CD4-positive, alpha-beta T cell (primary cell): ENCODE measurements at regions of chr12 and their contacts with region 1.

Region 1: GRCh38 chr12:121917979-121918678 is at the start of gene CFAP251:
- DNase-seq: peak; percentile 87 to 98 (median 95)
- ATAC-seq: peak; percentile 99
- H3K4me3 ChIP-seq: peak within 1 kb of the TSS; percentile 51
- H3K4me3 Mint-ChIP-seq: peak within 1 kb of the TSS; percentile 52
- H3K27ac ChIP-seq: peak within 1 kb of the TSS; percentile 48 to 69
- H3K27ac Mint-ChIP-seq: peak within 1 kb of the TSS; percentile 80
- H3K4me1 ChIP-seq: peaks cover 14% of the 10 kb centered on the region
- H3K4me1 Mint-ChIP-seq: peaks cover 8% of the 10 kb centered on the region
- H3K27me3 ChIP-seq: no peaks in the 10 kb centered on the region
- H3K27me3 Mint-ChIP-seq: no peaks in the 10 kb centered on the region
- CTCF ChIP-seq: peak; percentile 91
- total RNA-seq, gene CFAP251: 0.28 to 0.33 TPM

Region 2: DNA sequence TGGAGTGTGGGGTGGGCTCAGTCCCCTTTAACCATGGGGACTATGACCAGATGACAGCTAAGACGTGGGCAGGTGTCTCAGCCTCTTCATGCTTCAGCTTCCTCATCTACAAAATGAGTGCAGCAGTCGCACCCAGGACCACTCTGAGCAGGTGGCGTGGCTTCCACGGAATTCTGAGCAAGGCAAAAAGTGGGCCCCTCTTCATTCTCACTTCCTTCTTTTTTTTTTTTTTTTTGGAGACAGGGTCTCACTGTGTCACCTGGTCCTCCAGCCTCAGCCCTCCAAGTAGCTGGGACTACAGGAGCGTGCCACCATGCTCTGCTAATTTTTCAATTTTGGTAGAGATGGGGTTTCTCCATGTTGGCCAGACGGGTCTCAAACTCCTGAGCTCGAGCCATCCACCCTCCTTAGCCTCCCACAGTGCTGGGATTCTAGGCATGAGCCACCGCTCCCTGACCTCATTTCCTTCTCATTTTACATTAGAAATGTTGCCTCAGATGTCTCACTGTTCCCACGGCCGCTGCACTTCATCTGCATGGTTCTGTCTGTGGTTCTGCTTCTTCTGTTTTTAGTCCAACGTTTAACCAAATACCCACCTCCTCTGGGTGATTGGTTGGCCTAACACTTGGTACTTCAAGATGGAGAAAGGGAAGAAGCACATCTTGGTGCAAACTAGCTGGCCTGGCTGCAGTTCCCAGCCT is 62.2 kb after region 1 on chr12:
- CTCF ChIA-PET with region 1: no interaction called
- POLR2A ChIA-PET with region 1: no interaction called
- intact Hi-C with region 1: no loop called
- DNase-seq: peak in 3 of 14 experiments; percentile 25 to 62 (median 51)
- ATAC-seq: no peak
- H3K4me3 ChIP-seq: no peak overlapping the region
- H3K4me3 Mint-ChIP-seq: no peak overlapping the region
- H3K27ac ChIP-seq: no peak overlapping the region
- H3K27ac Mint-ChIP-seq: no peak overlapping the region
- H3K4me1 ChIP-seq: no peaks in the 10 kb centered on the region
- H3K4me1 Mint-ChIP-seq: peaks cover 9% of the 10 kb centered on the region
- H3K27me3 ChIP-seq: no peaks in the 10 kb centered on the region
- H3K27me3 Mint-ChIP-seq: no peaks in the 10 kb centered on the region
- CTCF ChIP-seq: no peak

Region 3: DNA sequence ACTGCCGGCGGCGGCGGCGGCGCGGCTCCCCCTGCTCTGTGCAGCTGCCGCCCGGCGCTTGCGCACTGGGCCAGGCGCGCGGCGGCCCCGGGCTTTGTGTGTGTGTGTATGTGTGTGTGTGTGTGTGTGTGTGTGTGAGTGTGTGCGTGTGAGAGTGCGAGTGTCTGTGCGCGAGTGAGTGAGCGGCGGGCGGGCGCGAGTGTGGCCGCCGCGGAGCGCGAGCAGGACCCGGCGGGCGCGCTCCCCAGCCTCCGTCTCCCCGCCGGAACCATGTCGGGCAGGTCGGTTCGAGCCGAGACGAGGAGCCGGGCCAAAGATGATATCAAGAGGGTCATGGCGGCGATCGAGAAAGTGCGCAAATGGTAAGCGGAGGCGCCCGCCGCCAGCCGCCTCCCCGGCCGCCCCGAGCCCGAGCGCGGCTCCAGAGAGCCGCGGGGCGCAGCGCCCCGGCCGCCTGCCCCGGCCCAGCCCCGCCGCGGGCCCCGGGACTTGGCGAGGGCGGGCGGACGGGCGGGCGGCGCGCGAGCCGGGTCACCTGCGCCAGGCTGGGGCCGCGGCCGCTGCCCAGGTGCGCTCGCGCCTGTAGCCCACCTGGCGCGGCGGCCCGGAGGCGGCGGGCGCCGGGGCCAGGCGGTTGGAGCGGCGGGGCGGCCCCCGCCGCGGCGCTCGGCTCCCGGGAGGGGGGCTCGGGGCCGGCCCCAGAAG is 103.8 kb after region 1 on chr12 and contains the start of gene BCL7A:
- CTCF ChIA-PET with region 1: interaction called, 5 read pairs
- POLR2A ChIA-PET with region 1: interaction called, 3 read pairs
- intact Hi-C with region 1: loop called (anchors 1 to 2 kb)
- DNase-seq: peak; percentile 19 to 81 (median 52)
- ATAC-seq: peak; percentile 75
- H3K4me3 ChIP-seq: peak within 1 kb of the TSS; percentile 60
- H3K4me3 Mint-ChIP-seq: peak within 1 kb of the TSS; percentile 94
- H3K27ac ChIP-seq: no peak within 1 kb of the TSS
- H3K27ac Mint-ChIP-seq: peak within 1 kb of the TSS; percentile 78
- H3K4me1 ChIP-seq: peaks cover 25% of the 10 kb centered on the region
- H3K4me1 Mint-ChIP-seq: peaks cover 12% of the 10 kb centered on the region
- H3K27me3 ChIP-seq: peaks cover 4 to 15% of the 10 kb centered on the region in 2 experiments
- H3K27me3 Mint-ChIP-seq: peaks cover 10% of the 10 kb centered on the region
- CTCF ChIP-seq: no peak
- total RNA-seq, gene BCL7A: 3.5 to 4.4 TPM

Region 4: GRCh38 chr12:122051231-122051876 is 133.2 kb after region 1 on chr12:
- CTCF ChIA-PET with region 1: no interaction called
- POLR2A ChIA-PET with region 1: no interaction called
- intact Hi-C with region 1: no loop called
- DNase-seq: no peak
- ATAC-seq: no peak
- H3K4me3 ChIP-seq: no peak overlapping the region
- H3K4me3 Mint-ChIP-seq: no peak overlapping the region
- H3K27ac ChIP-seq: no peak overlapping the region
- H3K27ac Mint-ChIP-seq: no peak overlapping the region
- H3K4me1 ChIP-seq: peaks cover 9% of the 10 kb centered on the region
- H3K4me1 Mint-ChIP-seq: peaks cover 4% of the 10 kb centered on the region
- H3K27me3 ChIP-seq: no peaks in the 10 kb centered on the region
- H3K27me3 Mint-ChIP-seq: no peaks in the 10 kb centered on the region
- CTCF ChIP-seq: no peak

Region 5: GRCh38 chr12:122123051-122123760 is 205.1 kb after region 1 on chr12:
- CTCF ChIA-PET with region 1: no interaction called
- POLR2A ChIA-PET with region 1: no interaction called
- intact Hi-C with region 1: loop called (anchors 1 to 2 kb)
- DNase-seq: peak; percentile 53 to 84 (median 66)
- ATAC-seq: peak; percentile 79
- H3K4me3 ChIP-seq: no peak overlapping the region
- H3K4me3 Mint-ChIP-seq: peak overlapping the region; percentile 68
- H3K27ac ChIP-seq: no peak overlapping the region
- H3K27ac Mint-ChIP-seq: peak overlapping the region; percentile 69
- H3K4me1 ChIP-seq: peaks cover 19% of the 10 kb centered on the region
- H3K4me1 Mint-ChIP-seq: peaks cover 39% of the 10 kb centered on the region
- H3K27me3 ChIP-seq: no peaks in the 10 kb centered on the region
- H3K27me3 Mint-ChIP-seq: no peaks in the 10 kb centered on the region
- CTCF ChIP-seq: peak; percentile 95

Region 6: GRCh38 chr12:122265931-122266771 is 348.0 kb after region 1 on chr12 and contains the start of gene VPS33A:
- CTCF ChIA-PET with region 1: no interaction called
- POLR2A ChIA-PET with region 1: interaction called, 4 read pairs
- intact Hi-C with region 1: loop called in 1 of 2 experiments (anchors 5 kb)
- DNase-seq: peak; percentile 85 to 97 (median 88)
- ATAC-seq: peak; percentile 68
- H3K4me3 ChIP-seq: peak within 1 kb of the TSS; percentile 85
- H3K4me3 Mint-ChIP-seq: peak within 1 kb of the TSS; percentile 100
- H3K27ac ChIP-seq: peak within 1 kb of the TSS; percentile 94 to 97
- H3K27ac Mint-ChIP-seq: peak within 1 kb of the TSS; percentile 99
- H3K4me1 ChIP-seq: peaks cover 25% of the 10 kb centered on the region
- H3K4me1 Mint-ChIP-seq: peaks cover 33% of the 10 kb centered on the region
- H3K27me3 ChIP-seq: no peaks in the 10 kb centered on the region
- H3K27me3 Mint-ChIP-seq: peaks cover 8% of the 10 kb centered on the region
- CTCF ChIP-seq: no peak
- total RNA-seq, gene VPS33A: 12.0 to 14.2 TPM